Activated naive CD4-positive, alpha-beta T cell treated with anti-CD3 and anti-CD28 coated beads for 36 hours (primary cell): ENCODE measurements at regions of chr21 and their contacts with region 1.

Region 1: DNA sequence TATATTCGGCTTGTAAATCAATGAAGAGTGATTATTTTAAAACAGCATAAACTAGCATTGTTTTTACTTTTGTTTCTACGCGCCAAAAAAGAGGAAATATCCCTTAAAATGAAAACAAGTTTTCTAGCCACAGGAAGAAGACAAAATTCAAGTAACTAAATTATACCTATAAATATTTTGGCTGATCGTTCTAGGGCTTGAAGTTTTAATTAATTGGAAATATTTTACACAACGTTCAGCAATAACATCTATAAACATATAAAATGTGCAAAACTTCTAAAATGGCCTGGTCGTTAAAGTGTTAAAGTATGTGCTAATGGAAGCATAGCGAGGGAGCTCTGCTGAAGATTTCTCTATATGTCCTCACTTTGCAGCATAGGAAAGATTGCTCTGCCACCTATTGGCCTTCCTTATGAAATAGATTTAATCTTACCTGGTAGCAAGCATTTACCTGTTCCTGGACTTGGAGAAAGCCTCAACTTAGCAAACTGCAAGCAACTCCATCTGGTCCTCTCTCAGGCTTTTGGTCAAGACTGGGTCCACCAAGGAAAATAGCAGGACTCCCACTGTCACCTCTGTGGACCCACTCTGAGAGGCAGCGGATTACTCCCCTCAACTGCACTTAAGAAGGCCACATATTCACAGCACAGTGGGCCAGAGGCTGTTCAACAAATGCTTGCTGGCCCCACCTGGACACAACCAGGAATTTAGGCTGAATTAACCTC is 351.3 kb upstream of the RUNX1 start:
- DNase-seq: peak; percentile 58
- H3K4me3 Mint-ChIP-seq: peak overlapping the region; percentile 22
- H3K27ac Mint-ChIP-seq: peak overlapping the region; percentile 27
- H3K4me1 Mint-ChIP-seq: peaks cover 24% of the 10 kb centered on the region
- H3K27me3 Mint-ChIP-seq: no peaks in the 10 kb centered on the region

Region 2: GRCh38 chr21:34693192-34693810 is 707.1 kb before region 1 on chr21:
- CTCF ChIA-PET with region 1: interaction called, 3 read pairs
- intact Hi-C with region 1: loop called (anchors 1 kb)
- DNase-seq: peak; percentile 69
- H3K4me3 Mint-ChIP-seq: no peak overlapping the region
- H3K27ac Mint-ChIP-seq: no peak overlapping the region
- H3K4me1 Mint-ChIP-seq: no peaks in the 10 kb centered on the region
- H3K27me3 Mint-ChIP-seq: peaks cover 13% of the 10 kb centered on the region

Region 3: DNA sequence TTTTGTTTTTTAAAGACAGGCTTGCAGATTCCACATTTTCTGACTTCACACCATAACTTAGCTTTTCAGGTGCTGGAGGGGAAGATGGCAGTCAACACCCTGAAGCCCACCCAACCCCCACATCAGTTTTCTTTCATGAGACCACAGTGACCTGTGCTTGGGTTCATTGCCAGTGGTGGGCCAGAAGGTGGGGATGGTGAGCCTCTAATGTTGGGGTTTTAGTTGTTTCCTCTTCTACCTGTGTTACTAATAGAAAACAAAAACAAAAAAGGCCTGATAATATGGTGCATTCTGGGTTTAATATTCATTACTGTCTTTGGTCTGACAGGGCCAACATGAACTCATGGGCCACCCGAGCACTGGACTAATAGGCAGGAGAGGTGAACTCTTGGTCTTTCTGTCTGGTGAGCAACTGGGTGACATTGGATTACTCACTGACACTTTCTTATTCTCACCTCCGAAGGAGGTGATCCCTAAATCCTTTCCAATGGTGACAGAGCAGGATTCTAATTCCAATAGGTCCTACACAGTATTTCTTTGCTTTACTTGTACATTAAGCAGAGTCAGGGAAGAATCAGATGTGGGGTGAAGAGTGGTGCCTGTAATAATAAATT is 598.8 kb before region 1 on chr21:
- CTCF ChIA-PET with region 1: no interaction called
- intact Hi-C with region 1: loop called (anchors 5 kb)
- DNase-seq: peak; percentile 31
- H3K4me3 Mint-ChIP-seq: no peak overlapping the region
- H3K27ac Mint-ChIP-seq: peak overlapping the region; percentile 22
- H3K4me1 Mint-ChIP-seq: peaks cover 41% of the 10 kb centered on the region
- H3K27me3 Mint-ChIP-seq: no peaks in the 10 kb centered on the region

Region 4: DNA sequence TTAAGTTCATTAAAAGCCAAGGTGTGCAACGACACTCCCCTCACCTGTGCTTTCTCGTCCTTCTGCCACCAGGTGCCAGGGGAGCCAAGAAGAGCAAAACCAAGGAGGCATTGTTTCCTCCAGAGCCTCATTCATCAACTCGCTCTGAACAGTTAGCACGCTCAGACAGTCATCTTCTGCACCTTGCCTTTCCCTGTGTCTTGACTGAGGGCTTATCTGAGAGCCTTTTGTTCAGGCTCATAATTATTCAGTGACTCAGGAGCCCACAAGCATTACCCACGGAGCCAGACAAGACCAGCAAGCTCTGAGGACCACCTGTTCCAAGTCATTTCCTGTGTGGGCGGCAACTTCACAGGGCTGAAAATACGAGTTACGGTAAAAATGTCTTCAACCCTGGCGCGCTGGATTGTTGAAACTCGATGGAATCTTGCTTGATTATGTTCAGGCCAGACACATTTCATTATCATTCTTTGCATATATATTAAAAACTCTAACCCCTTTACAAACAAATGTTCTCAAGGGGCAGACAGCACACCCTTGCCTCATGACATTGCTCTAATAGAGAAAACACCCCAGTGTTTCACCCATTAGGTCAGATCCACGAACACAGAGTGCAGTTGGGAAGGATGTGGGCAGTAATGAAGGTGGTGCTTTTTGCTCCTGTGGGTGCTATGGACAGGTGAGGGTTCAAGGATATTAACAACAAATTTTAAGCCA is 261.6 kb before region 1 on chr21:
- CTCF ChIA-PET with region 1: interaction called, 3 read pairs
- intact Hi-C with region 1: loop called (anchors 2 kb)
- DNase-seq: peak; percentile 87
- H3K4me3 Mint-ChIP-seq: peak overlapping the region; percentile 70
- H3K27ac Mint-ChIP-seq: peak overlapping the region; percentile 95
- H3K4me1 Mint-ChIP-seq: peaks cover 38% of the 10 kb centered on the region
- H3K27me3 Mint-ChIP-seq: no peaks in the 10 kb centered on the region

Region 5: DNA sequence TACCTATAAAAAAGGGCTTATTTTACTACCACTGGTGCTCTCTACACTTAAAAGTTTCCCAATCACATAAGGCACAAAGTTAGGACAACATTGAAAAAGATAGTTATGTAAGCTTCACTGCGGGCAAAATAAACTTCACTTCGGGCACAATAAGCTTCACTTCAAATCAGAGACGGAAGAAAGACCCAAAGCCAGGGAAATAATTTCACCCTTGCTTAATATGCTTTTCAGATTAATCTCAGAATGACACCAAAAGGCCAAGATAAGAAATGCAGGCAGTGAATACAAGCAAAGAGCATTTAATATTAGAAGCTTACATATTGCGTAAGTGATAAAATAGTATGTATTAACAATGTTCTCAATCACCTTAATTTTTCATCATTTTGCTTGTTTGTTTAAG is 215.7 kb after region 1 on chr21:
- CTCF ChIA-PET with region 1: no interaction called
- intact Hi-C with region 1: loop called (anchors 2 kb)
- DNase-seq: no peak
- H3K4me3 Mint-ChIP-seq: no peak overlapping the region
- H3K27ac Mint-ChIP-seq: no peak overlapping the region
- H3K4me1 Mint-ChIP-seq: peaks cover 2% of the 10 kb centered on the region
- H3K27me3 Mint-ChIP-seq: no peaks in the 10 kb centered on the region

Region 6: GRCh38 chr21:35940074-35940927 is 539.9 kb after region 1 on chr21:
- CTCF ChIA-PET with region 1: no interaction called
- intact Hi-C with region 1: loop called (anchors 5 kb)
- DNase-seq: peak; percentile 29
- H3K4me3 Mint-ChIP-seq: no peak overlapping the region
- H3K27ac Mint-ChIP-seq: no peak overlapping the region
- H3K4me1 Mint-ChIP-seq: no peaks in the 10 kb centered on the region
- H3K27me3 Mint-ChIP-seq: no peaks in the 10 kb centered on the region